ENCODE measurements at regions of chrX and their contacts with region 1.

Region 1: GRCh38 chrX:32455704-32456103 is 755.6 kb downstream of the DMD start:
- DNase-seq: no peak
- H3K4me3 ChIP-seq: no peak overlapping the region
- H3K27ac ChIP-seq: no peak overlapping the region
- H3K4me1 ChIP-seq: no peaks in the 10 kb centered on the region
- H3K27me3 ChIP-seq: no peaks in the 10 kb centered on the region
- CTCF ChIP-seq: no peak

Region 2: GRCh38 chrX:33324099-33324498 is 868.4 kb after region 1 on chrX:
- intact Hi-C with region 1: no loop called
- DNase-seq: no peak
- H3K4me3 ChIP-seq: no peak overlapping the region
- H3K27ac ChIP-seq: no peak overlapping the region
- H3K4me1 ChIP-seq: no peaks in the 10 kb centered on the region
- H3K27me3 ChIP-seq: no peaks in the 10 kb centered on the region
- CTCF ChIP-seq: no peak

Region 3: DNA sequence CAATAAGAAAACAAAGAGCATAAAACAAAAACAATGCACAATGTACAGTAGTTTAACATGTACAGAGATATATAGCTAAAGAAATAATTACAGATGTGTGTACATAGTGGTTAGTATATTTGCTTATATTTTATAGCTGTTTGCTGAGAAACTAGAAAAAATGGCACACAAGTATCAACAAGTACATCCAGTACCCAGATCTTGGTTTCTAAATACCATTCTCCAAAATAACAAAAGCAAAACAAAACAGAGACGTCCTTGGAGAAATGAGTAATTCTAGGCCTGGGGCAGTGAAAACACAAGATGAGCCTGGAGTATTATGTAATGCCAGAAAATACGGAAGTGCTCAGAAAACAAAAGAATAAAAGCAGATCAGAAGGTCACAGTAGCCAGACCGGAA is 2011.7 kb after region 1 on chrX:
- intact Hi-C with region 1: loop called (anchors 10 kb)
- DNase-seq: no peak
- H3K4me3 ChIP-seq: no peak overlapping the region
- H3K27ac ChIP-seq: no peak overlapping the region
- H3K4me1 ChIP-seq: peaks cover 0 to 3% (median 0%) of the 10 kb centered on the region in 4 donors
- H3K27me3 ChIP-seq: no peaks in the 10 kb centered on the region
- CTCF ChIP-seq: no peak